Right ventricle myocardium superior (tissue), 1 donor: ENCODE measurements at regions of chr13 and their contacts with region 1.

Region 1: GRCh38 chr13:75482070-75482819 is at the start of gene TBC1D4:
- DNase-seq: peak; percentile 91
- ATAC-seq: peak; percentile 89
- total RNA-seq, gene TBC1D4: 107 TPM

Region 2: GRCh38 chr13:75326173-75327134 is 155.8 kb before region 1 on chr13:
- intact Hi-C with region 1: loop called (anchors 10 kb)
- DNase-seq: no peak
- ATAC-seq: peak; percentile 71

Region 3: DNA sequence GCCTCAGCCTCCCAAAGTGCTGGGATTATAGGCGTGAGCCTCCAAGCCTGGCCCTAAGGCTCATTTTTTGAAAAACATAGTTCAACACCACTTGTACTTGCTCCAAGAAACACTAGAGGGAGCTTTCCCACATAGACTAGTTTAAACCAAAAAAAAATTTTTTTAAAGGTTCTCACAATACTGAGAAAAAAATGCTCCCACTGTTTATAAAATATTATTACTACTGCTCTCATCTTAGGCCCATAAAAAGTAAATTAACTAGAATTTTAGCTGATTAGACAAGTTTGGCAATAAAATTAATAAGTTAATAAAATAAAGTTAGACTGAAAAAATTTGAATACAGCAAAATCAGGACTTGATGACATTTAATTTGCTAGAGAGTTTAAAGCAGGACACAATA is 109.7 kb before region 1 on chr13:
- intact Hi-C with region 1: loop called (anchors 5 kb)
- DNase-seq: no peak
- ATAC-seq: peak; percentile 65

Region 4: GRCh38 chr13:75537401-75538365 is 55.4 kb after region 1 on chr13 and contains the start of gene COMMD6:
- intact Hi-C with region 1: loop called (anchors 5 kb)
- DNase-seq: peak; percentile 87
- ATAC-seq: peak; percentile 98
- total RNA-seq, gene COMMD6: 116 TPM